AG04449 (cell line): ENCODE measurements at regions of chr2 and their contacts with region 1.

Region 1: DNA sequence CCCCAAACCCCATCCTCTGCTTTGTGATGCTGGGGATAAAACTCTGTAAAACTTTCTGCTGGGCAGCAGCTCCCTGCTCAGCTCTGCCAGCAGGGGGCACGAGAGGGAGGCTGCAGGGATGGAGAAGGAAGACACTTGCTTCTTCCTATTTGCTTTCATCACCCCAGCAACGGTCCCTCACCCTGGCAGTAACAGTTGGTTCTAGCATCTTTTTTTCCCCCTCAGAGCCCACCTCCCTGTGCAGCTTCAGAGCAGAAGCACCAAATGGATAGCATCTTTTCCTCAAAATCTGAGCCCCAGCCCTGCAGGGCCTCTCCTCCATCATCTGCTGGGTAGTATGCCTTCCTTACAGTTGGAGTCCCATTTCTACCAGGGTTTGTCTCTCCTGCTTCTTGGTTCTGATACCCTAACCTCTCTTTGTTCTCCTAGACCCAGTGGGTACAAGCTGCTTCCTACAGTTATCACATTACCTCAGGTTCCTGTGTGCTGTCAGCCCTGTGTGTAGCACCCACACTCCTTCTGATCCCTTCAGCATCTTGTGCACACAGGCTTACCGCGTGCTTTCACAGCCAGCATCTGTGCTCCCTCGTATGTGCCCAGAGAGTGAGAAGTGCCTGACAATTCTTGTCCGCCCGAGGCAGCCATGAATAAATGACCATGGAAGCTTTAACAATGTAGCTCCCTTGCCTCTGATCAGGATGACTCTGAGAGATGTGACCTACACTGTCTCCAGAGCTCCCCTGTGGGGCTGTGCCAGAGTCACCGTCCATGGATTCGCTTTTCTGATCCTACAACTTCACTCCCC is 14.5 kb downstream of the CKAP2L start:
- DNase-seq: peak; percentile 21
- H3K4me3 ChIP-seq: no peak overlapping the region
- CTCF ChIP-seq: peak; percentile 99

Region 2: DNA sequence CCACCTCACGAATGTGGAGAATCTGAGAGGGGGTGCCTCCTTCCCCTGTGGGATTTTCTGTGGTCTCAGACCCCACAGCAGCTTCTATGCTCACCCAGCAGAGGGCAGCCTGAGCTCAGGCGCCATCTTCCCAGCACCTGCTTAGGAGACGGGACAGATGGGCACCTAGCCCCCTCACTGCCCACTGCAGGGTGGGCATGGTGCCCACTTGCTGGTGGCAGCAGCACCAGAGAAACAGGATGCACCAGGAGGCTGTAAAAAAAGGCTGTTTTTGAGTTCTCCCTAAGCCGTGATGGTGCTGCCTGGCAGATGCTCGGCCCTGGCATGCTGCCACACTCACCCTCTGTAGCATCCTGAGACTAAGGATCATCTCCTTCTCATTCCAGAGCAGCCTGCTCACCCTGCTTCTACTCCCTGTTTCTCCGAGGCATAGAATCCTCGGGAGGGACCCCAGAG is 123.3 kb before region 1 on chr2:
- CTCF ChIA-PET with region 1: interaction called, 12 read pairs
- POLR2A ChIA-PET with region 1: no interaction called
- DNase-seq: no peak
- H3K4me3 ChIP-seq: peak overlapping the region; percentile 9
- CTCF ChIP-seq: peak; percentile 91

Region 3: DNA sequence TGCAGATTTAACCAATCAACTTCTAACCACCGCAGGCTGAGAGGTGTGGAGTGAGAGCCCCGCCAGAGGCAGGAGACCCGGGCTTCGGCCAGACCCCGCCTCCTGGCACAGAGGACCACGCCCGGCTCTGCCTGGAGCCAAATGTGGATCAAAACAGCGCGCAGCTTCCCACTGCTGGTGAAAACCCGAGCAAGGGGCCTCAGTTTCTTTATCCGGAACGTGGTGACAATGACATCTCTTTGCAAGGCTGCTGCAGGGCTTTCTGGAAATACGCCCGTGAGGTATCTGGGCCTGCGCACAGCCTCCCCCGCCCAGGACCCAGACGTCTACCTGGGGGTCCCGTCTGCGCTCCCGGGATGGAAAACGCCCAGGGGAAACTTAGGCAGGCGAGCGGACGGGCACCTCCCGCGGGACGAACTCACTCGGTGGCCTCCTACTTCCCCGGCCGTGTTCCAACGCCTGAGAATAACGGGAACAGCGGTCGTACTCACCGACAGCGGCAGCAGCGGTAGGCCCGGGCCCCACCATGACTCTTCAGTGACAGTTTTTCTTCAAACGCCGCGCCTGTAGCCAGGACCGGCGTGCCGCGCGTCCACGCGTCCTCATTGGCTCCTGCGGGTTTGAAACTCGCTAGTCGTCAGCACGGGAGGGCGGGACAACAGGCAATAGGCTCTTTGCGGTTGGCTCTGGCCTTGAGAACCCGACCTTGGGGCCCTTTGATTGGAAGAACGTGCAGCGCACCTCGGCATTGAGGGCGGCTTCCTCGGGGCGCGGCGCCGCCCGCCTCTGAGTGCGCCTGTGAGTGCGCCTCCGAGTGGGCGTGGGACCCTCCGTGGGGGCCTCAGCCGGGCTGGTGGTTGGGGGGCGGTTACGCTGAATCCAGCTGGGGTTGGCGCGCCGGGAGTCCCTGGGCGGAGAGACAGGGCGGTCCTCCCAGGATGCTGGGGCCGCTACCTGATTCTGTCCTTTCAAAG is 14.4 kb after region 1 on chr2 and contains the start of gene CKAP2L:
- CTCF ChIA-PET with region 1: interaction called, 63 read pairs
- POLR2A ChIA-PET with region 1: no interaction called
- DNase-seq: peak; percentile 83
- H3K4me3 ChIP-seq: peak within 1 kb of the TSS; percentile 88
- CTCF ChIP-seq: no peak

Region 4: DNA sequence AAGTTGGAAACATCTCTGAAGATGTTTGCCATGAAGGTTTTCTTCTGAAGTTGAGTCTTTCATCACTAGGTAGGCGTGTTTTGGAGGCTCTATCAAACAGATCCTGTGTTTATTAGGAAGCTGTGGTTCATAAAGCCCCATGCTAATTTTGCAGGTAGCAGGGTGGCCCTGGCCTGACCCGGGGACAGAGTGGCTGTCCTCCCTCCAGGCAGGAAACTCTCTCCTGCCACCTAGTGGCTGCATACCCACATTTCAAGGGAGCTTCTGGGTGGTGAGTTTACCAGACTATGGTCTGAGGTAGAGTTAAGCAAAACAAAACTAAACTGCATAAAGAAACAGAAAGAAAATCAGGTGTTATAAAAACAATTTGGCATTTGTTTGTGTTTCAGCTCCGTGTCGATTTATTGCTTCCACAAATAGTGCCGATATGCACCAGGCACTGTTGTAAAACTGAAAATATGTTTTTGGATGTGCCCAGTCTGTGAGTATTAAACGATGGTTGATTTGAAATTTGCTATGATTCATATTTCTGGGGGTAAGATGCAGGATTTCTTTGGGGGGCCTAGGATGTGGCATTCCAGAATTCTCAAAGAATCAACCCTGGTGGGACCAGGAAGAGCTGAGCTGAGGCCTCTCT is 135.0 kb after region 1 on chr2:
- CTCF ChIA-PET with region 1: interaction called, 60 read pairs
- POLR2A ChIA-PET with region 1: no interaction called
- DNase-seq: no peak
- H3K4me3 ChIP-seq: no peak overlapping the region
- CTCF ChIP-seq: peak; percentile 51

Region 5: GRCh38 chr2:112928856-112929255 is 178.9 kb after region 1 on chr2:
- CTCF ChIA-PET with region 1: interaction called, 12 read pairs
- POLR2A ChIA-PET with region 1: no interaction called
- DNase-seq: no peak
- H3K4me3 ChIP-seq: no peak overlapping the region
- CTCF ChIP-seq: no peak

Region 6: GRCh38 chr2:112947374-112947773 is 197.4 kb after region 1 on chr2:
- CTCF ChIA-PET with region 1: interaction called, 688 read pairs
- POLR2A ChIA-PET with region 1: no interaction called
- DNase-seq: no peak
- H3K4me3 ChIP-seq: no peak overlapping the region
- CTCF ChIP-seq: no peak